ENCODE measurements at regions of chr2 and their contacts with region 1.

Region 1: GRCh38 chr2:232321156-232321816 is 57.3 kb upstream of the ALPP start:
- DNase-seq: peak; percentile 77

Region 2: DNA sequence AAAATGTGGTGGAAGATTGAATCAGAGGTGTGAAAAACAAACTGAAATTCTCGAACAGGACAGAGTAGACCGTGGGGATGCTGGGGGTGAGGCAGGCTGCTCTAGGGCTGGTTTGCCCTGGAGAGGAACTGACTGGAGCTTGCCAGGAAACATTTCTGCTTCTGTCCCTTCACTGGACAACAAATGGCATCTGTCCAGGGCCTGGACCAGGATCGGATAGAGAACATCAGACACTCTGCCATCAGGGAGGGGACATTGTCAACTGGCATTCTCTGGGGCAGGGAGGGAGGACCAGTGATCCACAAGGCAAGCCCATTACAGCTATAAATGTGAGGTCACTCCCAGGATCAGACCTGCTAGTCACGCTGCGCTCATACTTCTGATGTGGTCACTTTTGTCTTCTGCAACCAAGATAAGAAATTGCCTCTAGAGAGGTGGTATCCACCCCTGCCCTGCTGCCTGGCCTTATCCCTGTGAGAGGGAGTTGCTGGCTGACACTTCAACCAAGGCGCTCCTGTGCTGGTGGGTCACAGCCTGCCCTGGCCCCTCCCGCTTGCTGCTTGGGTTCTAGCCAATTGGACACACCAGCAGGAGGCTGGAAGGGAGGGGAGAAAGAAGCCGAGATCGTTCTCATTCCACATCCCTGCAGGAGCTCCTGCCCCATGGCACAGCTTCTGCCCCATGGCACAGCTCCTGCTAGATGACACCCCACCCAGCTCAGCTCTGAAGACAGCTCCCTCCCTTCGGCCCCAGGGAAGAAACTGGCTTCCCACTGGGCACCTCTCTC is 403.8 kb before region 1 on chr2:
- intact Hi-C with region 1: loop called in 1 of 2 experiments (anchors 5 kb)
- DNase-seq: peak; percentile 65

Region 3: DNA sequence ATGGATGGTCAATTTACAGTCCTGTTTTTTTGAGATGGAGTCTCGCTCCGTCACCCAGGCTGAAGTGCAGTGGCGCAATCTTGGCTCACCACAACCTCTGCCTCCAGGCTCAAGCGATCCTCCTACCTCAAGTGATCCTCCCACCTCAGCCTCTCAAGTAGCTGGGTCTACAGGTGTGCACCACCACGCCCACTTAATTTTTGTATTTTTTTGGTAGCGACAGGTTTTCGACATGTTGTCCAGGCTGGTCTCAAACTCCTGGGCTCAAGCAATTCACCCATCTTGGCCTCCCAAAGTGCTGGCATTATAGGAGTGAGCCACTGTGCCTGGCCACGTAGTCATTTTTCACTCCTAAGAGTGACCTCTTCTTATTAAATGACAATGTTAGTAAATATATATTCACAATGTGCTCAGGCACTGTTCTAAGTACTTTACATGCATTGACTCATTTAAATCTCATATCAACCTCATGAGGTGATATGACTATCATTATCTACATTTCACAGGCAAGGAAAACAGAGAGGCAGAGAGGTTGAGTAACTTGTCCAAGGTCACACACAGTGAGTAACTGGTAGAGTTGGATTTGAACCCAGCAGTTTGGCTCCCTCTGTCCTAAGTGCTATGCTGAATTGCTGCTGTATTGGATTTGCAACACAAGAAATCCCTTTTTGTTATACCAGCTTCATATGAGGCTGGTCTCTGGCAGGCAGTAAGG is 365.4 kb before region 1 on chr2:
- intact Hi-C with region 1: no loop called
- DNase-seq: no peak

Region 4: GRCh38 chr2:232162186-232162585 is 159.1 kb before region 1 on chr2:
- intact Hi-C with region 1: no loop called
- DNase-seq: no peak

Region 5: DNA sequence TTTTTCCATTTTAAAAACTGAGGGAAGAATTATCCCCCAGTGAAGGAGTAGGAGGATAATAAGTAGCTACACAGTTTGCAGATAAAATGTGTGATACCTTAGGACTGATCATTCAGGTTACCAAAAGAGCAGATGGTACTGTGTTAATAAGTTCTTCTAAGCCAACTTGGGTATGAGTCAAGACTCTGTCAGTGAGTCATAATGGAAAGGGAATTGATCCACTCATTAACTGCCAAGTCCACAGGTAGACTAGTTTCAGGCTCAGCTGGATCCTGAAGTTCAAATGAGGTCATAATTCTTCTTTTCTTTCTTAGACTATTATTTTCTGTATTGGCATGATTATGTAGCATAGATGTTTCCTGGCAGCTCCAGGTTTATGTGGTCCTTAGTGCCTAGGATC is 85.1 kb before region 1 on chr2:
- intact Hi-C with region 1: no loop called
- DNase-seq: no peak

Region 6: GRCh38 chr2:232400256-232401015 is 79.2 kb after region 1 on chr2:
- intact Hi-C with region 1: no loop called
- DNase-seq: no peak

Measured in posterior vena cava (tissue), 2 donors.